Activated CD4-positive, alpha-beta memory T cell treated with anti-CD3 and anti-CD28 coated beads, Interleukin-2, amount 10 ng/mL, durations not matched to agents 7 days and 5 days (primary cell): ENCODE measurements at regions of chr12 and their contacts with region 1.

Region 1: DNA sequence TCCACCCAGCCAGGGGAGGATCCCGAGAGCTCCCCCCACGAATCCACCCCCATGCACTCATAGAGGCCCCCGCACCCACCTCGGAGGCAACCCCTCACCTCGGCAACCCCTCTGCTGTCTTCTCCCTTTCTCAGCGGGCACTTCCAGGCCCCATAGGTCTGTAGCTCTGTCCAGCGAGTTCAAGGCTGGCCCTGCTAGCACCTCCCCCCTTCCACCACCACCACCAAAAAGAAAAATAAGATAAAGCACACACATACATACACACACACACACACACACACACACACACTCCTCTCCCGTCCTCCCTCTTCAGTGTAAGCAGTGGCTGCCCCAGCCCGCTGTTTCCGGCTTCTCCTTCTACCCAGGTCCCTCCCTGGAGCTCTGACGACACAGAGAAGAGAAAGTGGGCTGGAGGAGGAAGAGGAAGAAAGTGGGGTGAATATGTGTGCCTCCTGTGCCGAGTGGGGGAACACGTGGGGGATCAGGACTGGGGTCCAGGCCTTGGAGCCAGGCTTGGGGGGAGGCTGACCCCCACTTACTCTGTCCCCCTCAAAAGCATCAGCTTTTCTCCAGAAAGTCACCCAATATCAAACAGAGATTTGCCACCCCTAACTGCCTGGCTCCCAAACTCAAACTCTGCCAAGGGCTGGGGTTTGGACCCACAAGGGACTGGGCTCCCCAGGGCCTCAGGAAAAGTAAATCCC is at the start of gene STAT6:
- DNase-seq: peak; percentile 91
- H3K4me3 Mint-ChIP-seq: peak within 1 kb of the TSS; percentile 92
- H3K27ac Mint-ChIP-seq: peak within 1 kb of the TSS; percentile 92
- H3K4me1 Mint-ChIP-seq: peaks cover 42% of the 10 kb centered on the region
- H3K27me3 Mint-ChIP-seq: peaks cover 4% of the 10 kb centered on the region
- total RNA-seq, gene STAT6: 127 to 128 TPM

Region 2: DNA sequence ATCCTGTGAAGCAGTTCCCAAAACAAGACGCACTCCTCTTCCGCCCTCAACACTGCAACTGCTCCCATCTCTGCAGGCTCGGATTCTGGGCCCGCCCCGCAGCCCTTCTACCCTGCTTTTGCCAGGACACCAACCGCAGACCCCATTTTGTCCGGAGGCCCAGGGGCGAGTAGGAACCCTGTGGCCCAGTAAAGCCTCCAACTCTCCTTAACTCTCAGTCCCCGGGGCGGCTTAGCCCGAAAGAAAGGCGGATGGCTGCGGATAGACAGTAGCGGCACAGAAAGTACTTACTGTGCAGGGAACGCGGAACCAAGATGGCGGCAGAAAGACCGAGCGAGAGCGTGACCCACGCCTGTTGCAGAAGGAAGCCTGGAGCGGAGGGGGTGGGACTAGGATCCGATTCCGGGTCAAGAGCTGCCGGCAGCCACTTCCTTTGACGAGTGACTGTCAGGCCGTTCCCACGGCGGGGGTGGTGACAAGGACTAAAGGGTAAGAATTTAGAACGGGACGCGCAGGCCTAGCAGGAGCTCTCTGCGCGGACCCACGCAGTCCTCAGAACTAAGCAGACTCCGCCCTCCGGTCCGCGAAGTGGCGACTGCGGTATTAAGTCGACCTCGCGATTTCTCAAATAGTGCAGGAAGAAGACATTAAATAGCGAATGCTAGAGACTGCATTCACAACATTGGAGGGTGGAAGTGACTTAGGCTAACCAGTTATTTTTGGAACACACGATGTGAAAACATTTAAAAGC is 386.0 kb before region 1 on chr12 and contains the start of gene NACA:
- CTCF ChIA-PET with region 1: interaction called, 4 read pairs
- POLR2A ChIA-PET with region 1: interaction called, 14 read pairs
- DNase-seq: peak; percentile 99
- H3K4me3 Mint-ChIP-seq: peak within 1 kb of the TSS; percentile 94
- H3K27ac Mint-ChIP-seq: peak within 1 kb of the TSS; percentile 97
- H3K4me1 Mint-ChIP-seq: peaks cover 49% of the 10 kb centered on the region
- H3K27me3 Mint-ChIP-seq: no peaks in the 10 kb centered on the region
- total RNA-seq, gene NACA: 826 to 860 TPM

Region 3: DNA sequence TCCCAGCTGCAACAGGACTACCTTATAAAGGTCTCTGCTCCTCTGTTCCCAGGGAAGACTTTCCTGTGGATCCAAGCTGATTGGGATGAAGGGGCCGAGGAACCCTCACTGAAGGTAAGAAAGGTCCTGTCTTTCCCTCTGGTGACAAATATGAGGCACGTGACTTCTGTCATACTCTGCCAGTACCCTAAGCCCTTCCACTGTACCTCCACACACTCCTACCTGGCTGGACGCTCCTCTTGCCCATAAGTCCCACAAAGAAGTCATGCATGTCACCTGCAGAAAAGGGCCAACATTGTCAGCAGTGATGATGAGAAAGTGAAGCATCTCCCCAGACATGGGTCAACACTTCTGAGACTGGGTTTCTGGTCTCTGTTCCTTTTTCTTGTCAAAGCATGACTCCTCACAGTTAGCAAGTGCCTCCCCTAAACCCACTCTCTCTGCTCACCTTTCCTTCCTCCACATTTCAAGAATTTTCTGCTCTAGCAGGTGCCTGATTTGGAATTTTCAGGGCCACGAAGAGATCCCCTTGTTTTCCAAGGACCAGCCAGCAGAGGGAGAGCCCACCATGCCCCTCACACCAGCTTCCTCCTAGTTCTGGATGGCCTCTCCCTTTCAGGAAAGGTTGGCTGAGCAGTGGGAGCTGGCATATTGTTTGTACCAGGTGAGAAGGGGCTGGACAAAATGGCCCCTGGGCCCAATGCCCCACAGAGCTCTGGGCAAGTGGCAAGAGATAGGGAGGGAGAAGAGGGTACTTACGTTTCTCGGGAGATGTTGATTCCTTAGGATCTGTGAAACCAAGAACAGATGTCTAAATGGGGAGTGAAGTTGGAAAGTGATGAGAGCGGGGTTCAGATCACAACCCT is 98.3 kb before region 1 on chr12:
- CTCF ChIA-PET with region 1: interaction called, 36 read pairs
- POLR2A ChIA-PET with region 1: interaction called, 21 read pairs
- DNase-seq: no peak
- H3K4me3 Mint-ChIP-seq: no peak overlapping the region
- H3K27ac Mint-ChIP-seq: no peak overlapping the region
- H3K4me1 Mint-ChIP-seq: peaks cover 14% of the 10 kb centered on the region
- H3K27me3 Mint-ChIP-seq: peaks cover 22% of the 10 kb centered on the region

Region 4: DNA sequence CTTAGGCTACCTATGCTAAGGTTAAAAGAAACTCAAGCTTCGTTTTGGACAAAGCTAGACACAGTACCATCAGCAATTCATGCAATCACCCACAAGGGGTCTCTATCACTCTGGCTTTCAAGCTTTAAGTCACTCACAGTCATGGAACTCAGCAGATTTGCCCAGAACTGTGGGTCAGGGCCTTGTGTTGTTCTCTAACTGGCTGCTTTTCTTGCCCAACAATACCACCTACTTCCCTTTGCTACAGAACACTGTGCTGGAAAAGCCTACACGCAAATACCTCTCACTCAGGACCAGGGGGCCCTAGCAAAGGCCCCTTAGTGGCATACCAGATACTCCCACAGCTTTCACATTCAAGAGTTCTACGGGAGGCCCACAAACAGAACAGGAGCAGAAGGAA is 41.7 kb before region 1 on chr12:
- CTCF ChIA-PET with region 1: interaction called, 230 read pairs
- POLR2A ChIA-PET with region 1: interaction called, 200 read pairs
- DNase-seq: peak; percentile 65
- H3K4me3 Mint-ChIP-seq: no peak overlapping the region
- H3K27ac Mint-ChIP-seq: peak overlapping the region; percentile 85
- H3K4me1 Mint-ChIP-seq: peaks cover 49% of the 10 kb centered on the region
- H3K27me3 Mint-ChIP-seq: no peaks in the 10 kb centered on the region

Region 5: GRCh38 chr12:57124259-57124877 is 13.2 kb after region 1 on chr12:
- CTCF ChIA-PET with region 1: interaction called, 72 read pairs
- POLR2A ChIA-PET with region 1: interaction called, 25 read pairs
- DNase-seq: peak; percentile 76
- H3K4me3 Mint-ChIP-seq: no peak overlapping the region
- H3K27ac Mint-ChIP-seq: no peak overlapping the region
- H3K4me1 Mint-ChIP-seq: peaks cover 5% of the 10 kb centered on the region
- H3K27me3 Mint-ChIP-seq: peaks cover 37% of the 10 kb centered on the region